GM12878 (cell line): ENCODE measurements at regions of chrX and their contacts with region 1.

Region 1: GRCh38 chrX:12901486-12901885 is 4.9 kb upstream of the TLR8 start:
- DNase-seq: no peak
- ATAC-seq: peak; percentile 93
- H3K4me3 ChIP-seq: no peak overlapping the region
- H3K27ac ChIP-seq: no peak overlapping the region
- H3K4me1 ChIP-seq: no peaks in the 10 kb centered on the region
- H3K27me3 ChIP-seq: no peaks in the 10 kb centered on the region
- CTCF ChIP-seq: peak; percentile 68 to 84 (median 75)
- EP300 ChIP-seq: no peak
- POLR2A ChIP-seq: no peak
- RAD21 ChIP-seq: peak; percentile 80

Region 2: GRCh38 chrX:12080265-12080664 is 821.2 kb before region 1 on chrX:
- CTCF ChIA-PET with region 1: no interaction called
- POLR2A ChIA-PET with region 1: no interaction called
- RAD21 ChIA-PET with region 1: no interaction called
- SMC1A ChIA-PET with region 1: no interaction called
- in situ Hi-C with region 1: loop called (anchors 25 kb)
- intact Hi-C with region 1: no loop called
- DNase-seq: no peak
- ATAC-seq: peak; percentile 66
- H3K4me3 ChIP-seq: no peak overlapping the region
- H3K27ac ChIP-seq: no peak overlapping the region
- H3K4me1 ChIP-seq: no peaks in the 10 kb centered on the region
- H3K27me3 ChIP-seq: no peaks in the 10 kb centered on the region; a peak in 1 of 4 replicates
- CTCF ChIP-seq: peak; percentile 49 to 55 (median 54); a peak in 5 of 6 replicates
- EP300 ChIP-seq: no peak
- POLR2A ChIP-seq: no peak
- RAD21 ChIP-seq: peak; percentile 76

Region 3: GRCh38 chrX:12505127-12505526 is 396.4 kb before region 1 on chrX:
- CTCF ChIA-PET with region 1: no interaction called
- POLR2A ChIA-PET with region 1: no interaction called
- RAD21 ChIA-PET with region 1: no interaction called
- SMC1A ChIA-PET with region 1: no interaction called
- in situ Hi-C with region 1: no loop called
- intact Hi-C with region 1: loop called (anchors 10 kb)
- DNase-seq: no peak
- ATAC-seq: no peak
- H3K4me3 ChIP-seq: no peak overlapping the region
- H3K27ac ChIP-seq: no peak overlapping the region
- H3K4me1 ChIP-seq: no peaks in the 10 kb centered on the region
- H3K27me3 ChIP-seq: no peaks in the 10 kb centered on the region
- CTCF ChIP-seq: no peak
- EP300 ChIP-seq: no peak
- POLR2A ChIP-seq: no peak
- RAD21 ChIP-seq: no peak

Region 4: GRCh38 chrX:12711435-12712040 is 189.9 kb before region 1 on chrX:
- CTCF ChIA-PET with region 1: no interaction called
- POLR2A ChIA-PET with region 1: no interaction called
- RAD21 ChIA-PET with region 1: no interaction called
- SMC1A ChIA-PET with region 1: no interaction called
- in situ Hi-C with region 1: no loop called
- intact Hi-C with region 1: no loop called
- DNase-seq: no peak
- ATAC-seq: no peak
- H3K4me3 ChIP-seq: no peak overlapping the region
- H3K27ac ChIP-seq: no peak overlapping the region
- H3K4me1 ChIP-seq: no peaks in the 10 kb centered on the region
- H3K27me3 ChIP-seq: peaks cover 0 to 1% of the 10 kb centered on the region in 2 experiments; a peak in 2 of 4 replicates
- CTCF ChIP-seq: no peak
- EP300 ChIP-seq: no peak
- POLR2A ChIP-seq: no peak
- RAD21 ChIP-seq: no peak

Region 5: GRCh38 chrX:12791257-12792228 is 109.9 kb before region 1 on chrX and contains the start of gene PRPS2:
- CTCF ChIA-PET with region 1: interaction called, 10 read pairs
- POLR2A ChIA-PET with region 1: no interaction called
- RAD21 ChIA-PET with region 1: interaction called, 4 read pairs
- SMC1A ChIA-PET with region 1: interaction called, 4 read pairs
- in situ Hi-C with region 1: no loop called
- intact Hi-C with region 1: no loop called
- DNase-seq: no peak
- ATAC-seq: peak; percentile 88
- H3K4me3 ChIP-seq: peak within 1 kb of the TSS; percentile 75
- H3K27ac ChIP-seq: peak within 1 kb of the TSS; percentile 58
- H3K4me1 ChIP-seq: no peaks in the 10 kb centered on the region
- H3K27me3 ChIP-seq: no peaks in the 10 kb centered on the region
- CTCF ChIP-seq: no peak
- EP300 ChIP-seq: no peak
- POLR2A ChIP-seq: peak; percentile 87
- RAD21 ChIP-seq: no peak
- polyA plus RNA-seq, gene PRPS2: 44.1 to 56.3 TPM

Region 6: GRCh38 chrX:13418126-13419097 is 516.9 kb after region 1 on chrX:
- CTCF ChIA-PET with region 1: no interaction called
- POLR2A ChIA-PET with region 1: no interaction called
- RAD21 ChIA-PET with region 1: no interaction called
- SMC1A ChIA-PET with region 1: no interaction called
- in situ Hi-C with region 1: no loop called
- intact Hi-C with region 1: no loop called
- DNase-seq: no peak
- ATAC-seq: peak; percentile 54
- H3K4me3 ChIP-seq: no peak overlapping the region
- H3K27ac ChIP-seq: no peak overlapping the region
- H3K4me1 ChIP-seq: peaks cover 7% of the 10 kb centered on the region; the same call in 1 of the 2 replicates
- H3K27me3 ChIP-seq: no peaks in the 10 kb centered on the region
- CTCF ChIP-seq: no peak
- EP300 ChIP-seq: no peak
- POLR2A ChIP-seq: no peak
- RAD21 ChIP-seq: no peak